Caco-2 (cell line): ENCODE measurements at regions of chr5 and their contacts with region 1.

Region 1: DNA sequence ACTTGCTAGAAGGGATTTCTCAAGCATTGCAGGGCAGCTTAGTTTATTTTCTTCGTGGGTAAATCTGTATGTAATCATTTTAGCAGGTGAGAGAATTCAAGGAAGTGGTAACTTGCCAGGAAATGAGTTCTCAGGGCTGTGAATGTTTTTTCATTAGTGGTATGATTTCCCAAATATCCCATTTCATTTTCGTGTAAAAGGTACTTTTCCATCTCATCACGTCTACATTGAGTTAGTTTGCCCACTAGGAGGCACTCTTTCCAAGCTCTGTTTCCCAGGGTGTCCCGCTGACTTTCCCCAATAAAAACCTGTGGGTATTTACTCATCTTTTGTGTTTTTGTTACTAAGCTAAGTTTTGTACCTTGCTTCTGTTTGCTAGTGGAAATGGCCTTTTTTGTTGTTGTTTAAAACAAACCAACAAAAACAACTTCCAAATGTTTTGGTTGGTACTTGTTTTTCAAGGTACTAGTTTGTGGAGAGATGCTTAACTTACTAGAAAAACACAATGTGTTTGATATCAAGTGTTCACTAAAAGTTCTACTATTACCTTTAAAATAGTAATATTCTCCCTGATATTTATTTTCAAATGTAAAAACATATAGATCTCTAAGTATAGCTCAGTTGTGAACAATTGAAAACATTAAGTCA is 373.6 kb downstream of the ADGRV1 start:
- DNase-seq: peak; percentile 54 to 72
- H3K4me3 ChIP-seq: no peak overlapping the region
- H3K4me3 Mint-ChIP-seq: no peak overlapping the region
- H3K27ac Mint-ChIP-seq: no peak overlapping the region
- H3K4me1 ChIP-seq: peaks cover 32% of the 10 kb centered on the region
- H3K4me1 Mint-ChIP-seq: peaks cover 28% of the 10 kb centered on the region
- H3K27me3 ChIP-seq: no peaks in the 10 kb centered on the region
- H3K27me3 Mint-ChIP-seq: no peaks in the 10 kb centered on the region
- CTCF ChIP-seq: peak; percentile 80 to 83

Region 2: DNA sequence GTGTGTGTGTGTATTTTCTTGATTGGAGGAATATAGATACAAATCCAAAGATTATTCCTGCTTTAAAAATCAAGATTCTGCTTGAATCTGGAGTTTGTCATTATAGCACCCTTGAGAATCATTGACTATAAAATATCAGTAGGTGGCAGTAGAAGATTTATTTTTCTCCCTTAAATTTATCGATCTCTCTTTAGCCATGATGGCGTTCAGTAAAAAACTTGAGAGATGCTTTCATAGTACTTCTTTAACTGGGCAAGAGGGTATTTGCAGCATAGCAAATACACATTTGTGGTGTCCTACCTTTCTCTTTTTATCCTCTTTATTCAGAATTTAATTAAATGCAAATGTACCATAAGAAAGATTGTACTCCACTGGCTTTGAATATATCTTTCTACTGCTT is 65.8 kb before region 1 on chr5:
- CTCF ChIA-PET with region 1: no interaction called
- POLR2A ChIA-PET with region 1: no interaction called
- intact Hi-C with region 1: loop called (anchors 1 kb)
- DNase-seq: no peak
- H3K4me3 ChIP-seq: no peak overlapping the region
- H3K4me3 Mint-ChIP-seq: no peak overlapping the region
- H3K27ac Mint-ChIP-seq: no peak overlapping the region
- H3K4me1 ChIP-seq: peaks cover 25% of the 10 kb centered on the region
- H3K4me1 Mint-ChIP-seq: peaks cover 14% of the 10 kb centered on the region
- H3K27me3 ChIP-seq: no peaks in the 10 kb centered on the region
- H3K27me3 Mint-ChIP-seq: no peaks in the 10 kb centered on the region
- CTCF ChIP-seq: peak; percentile 34 to 42

Region 3: GRCh38 chr5:91007251-91007650 is 75.1 kb after region 1 on chr5:
- CTCF ChIA-PET with region 1: no interaction called
- POLR2A ChIA-PET with region 1: no interaction called
- intact Hi-C with region 1: loop called (anchors 1 kb)
- DNase-seq: no peak
- H3K4me3 ChIP-seq: no peak overlapping the region
- H3K4me3 Mint-ChIP-seq: no peak overlapping the region
- H3K27ac Mint-ChIP-seq: no peak overlapping the region
- H3K4me1 ChIP-seq: no peaks in the 10 kb centered on the region
- H3K4me1 Mint-ChIP-seq: no peaks in the 10 kb centered on the region
- H3K27me3 ChIP-seq: no peaks in the 10 kb centered on the region
- H3K27me3 Mint-ChIP-seq: no peaks in the 10 kb centered on the region
- CTCF ChIP-seq: no peak

Region 4: GRCh38 chr5:91092859-91093783 is 160.9 kb after region 1 on chr5:
- CTCF ChIA-PET with region 1: interaction called, 6 read pairs
- POLR2A ChIA-PET with region 1: no interaction called
- intact Hi-C with region 1: loop called (anchors 2 kb)
- DNase-seq: peak in 1 of 2 experiments; percentile 19
- H3K4me3 ChIP-seq: no peak overlapping the region
- H3K4me3 Mint-ChIP-seq: peak overlapping the region; percentile 59
- H3K27ac Mint-ChIP-seq: peak overlapping the region; percentile 82
- H3K4me1 ChIP-seq: peaks cover 14% of the 10 kb centered on the region; the same call in 1 of the 2 replicates
- H3K4me1 Mint-ChIP-seq: peaks cover 18% of the 10 kb centered on the region
- H3K27me3 ChIP-seq: no peaks in the 10 kb centered on the region
- H3K27me3 Mint-ChIP-seq: no peaks in the 10 kb centered on the region
- CTCF ChIP-seq: no peak

Region 5: DNA sequence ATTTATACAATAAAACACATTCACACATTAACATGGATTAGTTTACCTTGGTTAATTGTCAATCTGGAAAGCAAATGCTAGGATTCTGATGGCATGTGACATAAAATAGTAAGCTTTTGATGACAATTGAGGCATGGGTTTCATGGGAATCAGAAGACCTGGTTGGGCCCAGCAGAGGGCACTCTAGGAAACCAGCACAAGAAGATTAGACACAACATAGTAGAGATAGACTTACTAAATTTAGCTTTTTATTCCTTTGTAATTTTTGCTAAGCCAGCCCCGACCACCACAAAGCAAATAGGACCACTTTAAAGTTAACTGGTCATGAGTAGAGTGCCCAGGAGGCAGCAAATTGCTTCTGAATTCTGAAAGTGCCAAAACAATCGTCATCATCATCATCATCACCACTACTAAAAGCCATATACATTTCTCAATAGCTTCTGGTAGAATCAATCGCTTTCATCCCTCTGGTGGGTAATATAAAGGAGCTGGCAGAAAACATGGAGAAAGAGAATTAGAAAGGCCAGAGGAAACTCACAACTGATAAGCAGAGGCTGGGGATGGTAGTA is 287.7 kb after region 1 on chr5:
- CTCF ChIA-PET with region 1: interaction called, 5 read pairs
- POLR2A ChIA-PET with region 1: no interaction called
- intact Hi-C with region 1: loop called (anchors 1 kb)
- DNase-seq: peak; percentile 64 to 68
- H3K4me3 ChIP-seq: no peak overlapping the region
- H3K4me3 Mint-ChIP-seq: no peak overlapping the region
- H3K27ac Mint-ChIP-seq: peak overlapping the region; percentile 75
- H3K4me1 ChIP-seq: peaks cover 43% of the 10 kb centered on the region
- H3K4me1 Mint-ChIP-seq: peaks cover 41% of the 10 kb centered on the region
- H3K27me3 ChIP-seq: no peaks in the 10 kb centered on the region
- H3K27me3 Mint-ChIP-seq: no peaks in the 10 kb centered on the region
- CTCF ChIP-seq: peak; percentile 60 to 62

Region 6: GRCh38 chr5:91383027-91383955 is 451.1 kb after region 1 on chr5 and contains the start of gene ARRDC3:
- CTCF ChIA-PET with region 1: interaction called, 8 read pairs
- POLR2A ChIA-PET with region 1: interaction called, 6 read pairs
- intact Hi-C with region 1: loop called (anchors 1 kb)
- DNase-seq: peak; percentile 97 to 98
- H3K4me3 ChIP-seq: peak within 1 kb of the TSS; percentile 65
- H3K4me3 Mint-ChIP-seq: peak within 1 kb of the TSS; percentile 88
- H3K27ac Mint-ChIP-seq: peak within 1 kb of the TSS; percentile 94
- H3K4me1 ChIP-seq: peaks cover 11% of the 10 kb centered on the region
- H3K4me1 Mint-ChIP-seq: no peaks in the 10 kb centered on the region
- H3K27me3 ChIP-seq: no peaks in the 10 kb centered on the region
- H3K27me3 Mint-ChIP-seq: no peaks in the 10 kb centered on the region
- CTCF ChIP-seq: peak in 1 of 2 experiments; percentile 12
- total RNA-seq, gene ARRDC3: 34.5 and 38.7 TPM in 2 replicates